ENCODE measurements at regions of chr5 and their contacts with region 1.

Region 1: DNA sequence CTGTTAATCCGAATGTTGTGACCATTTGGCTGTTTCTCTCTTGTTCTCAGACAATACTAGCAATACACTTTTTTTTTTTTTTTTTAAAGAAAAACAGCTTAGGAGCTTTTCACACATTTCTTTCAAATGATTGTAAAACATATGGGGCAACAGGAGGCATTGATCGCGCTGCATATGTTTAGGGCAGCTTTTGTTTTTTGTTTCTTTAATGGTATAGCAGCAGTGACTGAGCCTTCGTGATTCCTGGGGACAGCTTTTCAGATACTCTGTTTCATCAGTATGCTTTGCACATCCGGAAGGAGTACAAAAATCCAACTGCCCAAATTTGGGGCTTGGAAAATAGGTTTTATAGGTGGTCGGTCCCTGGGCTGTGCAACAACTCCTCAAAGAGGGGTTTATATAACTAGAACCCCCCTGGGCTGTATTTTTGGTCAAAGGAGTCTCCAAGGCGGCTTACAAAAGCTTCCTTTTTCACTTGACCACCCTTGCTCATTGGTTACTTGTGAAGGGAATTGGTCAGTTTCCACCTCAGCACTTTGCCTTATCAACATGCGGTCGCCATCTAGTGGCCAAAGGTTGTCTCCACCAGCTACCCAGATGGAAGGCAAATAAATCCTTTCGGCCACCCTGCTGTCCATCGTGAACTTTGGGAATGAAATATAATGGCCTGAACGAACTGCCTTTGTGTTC is 91.8 kb downstream of the PDE6A start:
- DNase-seq: peak; percentile 70 to 86
- ATAC-seq: peak; percentile 30 to 66 (median 46)
- H3K4me3 ChIP-seq: no peak overlapping the region
- H3K27ac ChIP-seq: peak overlapping the region; percentile 24
- H3K4me1 ChIP-seq: peaks cover 16% of the 10 kb centered on the region
- H3K27me3 ChIP-seq: no peaks in the 10 kb centered on the region
- CTCF ChIP-seq: peak; percentile 86

Region 2: GRCh38 chr5:149636851-149637246 is 215.9 kb before region 1 on chr5:
- intact Hi-C with region 1: loop called (anchors 1 to 5 kb)
- DNase-seq: no peak
- ATAC-seq: peak; percentile 68 to 74 (median 73)
- H3K4me3 ChIP-seq: no peak overlapping the region
- H3K27ac ChIP-seq: no peak overlapping the region
- H3K4me1 ChIP-seq: peaks cover 29% of the 10 kb centered on the region
- H3K27me3 ChIP-seq: no peaks in the 10 kb centered on the region
- CTCF ChIP-seq: peak; percentile 85

Region 3: GRCh38 chr5:149834246-149834855 is 18.4 kb before region 1 on chr5:
- intact Hi-C with region 1: loop called in 1 of 2 experiments (anchors 1 kb)
- DNase-seq: no peak
- ATAC-seq: peak; percentile 47 to 80 (median 68)
- H3K4me3 ChIP-seq: no peak overlapping the region
- H3K27ac ChIP-seq: no peak overlapping the region
- H3K4me1 ChIP-seq: peaks cover 6% of the 10 kb centered on the region
- H3K27me3 ChIP-seq: no peaks in the 10 kb centered on the region
- CTCF ChIP-seq: peak; percentile 69

Region 4: DNA sequence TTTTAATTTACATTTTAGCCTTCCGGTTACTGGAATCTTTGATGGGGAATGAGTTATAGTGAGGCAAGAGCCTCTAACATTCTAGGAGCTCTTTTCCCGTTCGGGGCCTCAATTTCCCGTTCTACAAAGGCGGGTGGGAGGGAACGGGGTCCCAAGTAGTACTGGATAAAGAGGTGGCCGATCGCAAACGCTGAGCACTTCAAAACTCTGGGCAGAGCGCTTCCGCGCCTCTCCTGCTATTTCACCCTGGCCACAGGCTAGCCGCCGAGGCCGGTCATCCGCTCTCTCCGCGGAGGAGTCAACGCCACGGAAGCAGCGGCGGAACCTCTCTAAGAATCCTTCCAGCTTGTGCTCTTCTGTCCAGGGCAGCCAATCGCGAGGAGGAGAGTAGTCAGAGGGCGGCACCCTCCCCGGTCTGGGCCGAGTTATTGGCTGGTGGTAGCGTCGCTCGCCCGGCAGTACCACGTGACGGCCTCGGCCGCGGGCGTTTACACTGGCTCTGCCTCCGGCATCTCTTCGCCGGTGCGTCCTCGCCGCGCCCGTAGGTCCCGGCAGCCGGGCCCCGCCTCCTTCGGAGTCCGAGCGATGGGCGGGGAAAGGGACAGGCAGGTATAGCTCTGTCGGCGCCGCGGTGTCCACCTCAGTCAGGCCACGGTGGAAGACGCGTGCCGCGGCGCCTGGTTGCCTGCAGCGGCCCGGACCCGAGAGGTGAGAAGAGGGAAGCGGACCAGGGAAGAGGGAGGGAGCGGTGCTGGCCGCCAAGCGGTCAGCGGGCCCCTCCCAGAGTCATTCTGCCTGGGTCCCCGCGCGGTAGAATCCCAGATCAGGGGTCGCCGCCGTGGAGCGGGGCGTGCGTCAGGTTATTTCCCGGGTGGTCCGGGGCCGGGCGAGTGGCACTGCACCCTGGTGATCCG is 107.7 kb after region 1 on chr5 and contains the start of gene SLC26A2:
- intact Hi-C with region 1: loop called in 1 of 2 experiments (anchors 5 kb)
- DNase-seq: peak; percentile 98
- ATAC-seq: peak; percentile 99 to 100 (median 99)
- H3K4me3 ChIP-seq: peak within 1 kb of the TSS; percentile 72
- H3K27ac ChIP-seq: peak within 1 kb of the TSS; percentile 92
- H3K4me1 ChIP-seq: no peaks in the 10 kb centered on the region
- H3K27me3 ChIP-seq: no peaks in the 10 kb centered on the region
- CTCF ChIP-seq: no peak
- total RNA-seq, gene SLC26A2: 4.1 to 20.1 (median 6.4) TPM

Region 5: DNA sequence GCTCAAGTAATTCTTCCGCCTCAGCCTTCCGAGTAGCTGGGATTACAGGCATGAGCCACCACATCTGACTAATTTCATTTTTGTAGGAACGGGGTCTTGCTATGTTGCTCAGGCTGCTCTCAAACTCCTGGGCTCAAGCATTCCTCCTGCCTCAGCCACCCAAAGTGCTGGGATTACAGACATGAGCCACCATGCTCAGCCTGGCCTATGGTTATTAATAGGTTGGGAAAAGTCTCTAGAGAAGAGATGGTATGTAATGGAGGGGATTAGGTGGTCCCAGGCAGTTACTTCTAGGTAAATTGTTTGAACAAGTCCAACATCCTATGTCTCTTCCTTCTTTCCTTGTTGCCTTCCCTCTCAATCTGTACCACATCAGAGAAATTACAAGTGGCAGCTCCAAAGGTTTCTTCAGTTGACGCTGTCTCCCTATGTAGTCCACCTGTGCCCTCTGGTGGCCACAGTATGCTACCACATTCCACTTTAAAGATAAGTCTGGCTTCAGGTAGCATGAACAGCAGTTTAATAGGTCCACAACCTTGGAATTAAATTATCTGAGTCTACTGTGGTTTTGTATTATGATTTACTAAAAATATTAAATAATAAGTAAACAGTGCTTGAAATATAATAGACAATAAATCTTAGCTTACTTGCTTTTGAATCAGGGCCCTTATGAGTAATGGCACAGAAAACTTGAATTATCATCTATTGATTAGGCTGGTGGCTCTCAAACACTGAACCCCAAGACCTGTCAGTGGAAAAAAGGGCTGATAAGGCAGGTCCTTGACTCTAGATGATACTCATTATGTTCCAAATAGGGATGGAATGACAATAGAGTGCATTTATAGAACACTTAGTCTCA is 138.0 kb after region 1 on chr5:
- intact Hi-C with region 1: loop called (anchors 5 kb)
- DNase-seq: peak; percentile 61 to 72
- ATAC-seq: peak; percentile 85 to 89 (median 87)
- H3K4me3 ChIP-seq: no peak overlapping the region
- H3K27ac ChIP-seq: no peak overlapping the region
- H3K4me1 ChIP-seq: peaks cover 13% of the 10 kb centered on the region
- H3K27me3 ChIP-seq: no peaks in the 10 kb centered on the region
- CTCF ChIP-seq: peak; percentile 96

Measured in psoas muscle (tissue), 8 donors.